B cell (primary cell): ENCODE measurements at regions of chr20 and their contacts with region 1.

Region 1: DNA sequence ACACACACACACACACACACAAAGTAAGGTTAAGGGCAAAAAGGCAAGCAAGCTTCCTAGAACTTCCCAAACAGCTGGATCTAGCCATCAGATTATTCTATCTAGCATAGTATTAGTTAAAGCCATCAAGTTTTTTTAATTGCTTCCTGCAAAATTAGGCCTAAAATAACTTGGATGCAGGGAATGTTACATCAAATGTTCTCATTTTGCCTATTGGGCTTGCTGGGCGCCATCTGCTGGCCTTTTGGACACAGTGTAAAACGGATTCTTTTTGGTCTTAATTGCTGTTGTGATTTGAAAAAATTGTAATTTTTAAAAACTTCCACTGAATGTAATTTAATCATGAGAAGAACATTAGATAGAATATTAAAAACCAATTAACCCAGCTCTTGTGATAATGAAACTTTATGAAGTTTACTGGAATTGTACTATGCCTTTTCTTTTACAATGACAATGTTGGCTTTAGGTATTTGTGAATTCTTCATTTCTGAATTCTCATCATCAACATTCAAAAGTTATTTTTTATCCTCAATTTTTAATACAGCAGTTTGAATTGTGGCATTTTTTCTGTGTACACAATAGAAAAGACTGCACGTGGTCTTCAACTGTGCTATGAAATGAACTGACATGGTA is 6.8 kb downstream of the MKKS start:
- DNase-seq: peak; percentile 62
- ATAC-seq: no peak
- H3K4me3 ChIP-seq: no peak overlapping the region
- H3K4me3 Mint-ChIP-seq: no peak overlapping the region
- H3K27ac ChIP-seq: no peak overlapping the region
- H3K27ac Mint-ChIP-seq: no peak overlapping the region
- H3K4me1 ChIP-seq: no peaks in the 10 kb centered on the region
- H3K4me1 Mint-ChIP-seq: peaks cover 34% of the 10 kb centered on the region
- H3K27me3 ChIP-seq: no peaks in the 10 kb centered on the region
- H3K27me3 Mint-ChIP-seq: no peaks in the 10 kb centered on the region
- CTCF ChIP-seq: peak; percentile 84

Region 2: DNA sequence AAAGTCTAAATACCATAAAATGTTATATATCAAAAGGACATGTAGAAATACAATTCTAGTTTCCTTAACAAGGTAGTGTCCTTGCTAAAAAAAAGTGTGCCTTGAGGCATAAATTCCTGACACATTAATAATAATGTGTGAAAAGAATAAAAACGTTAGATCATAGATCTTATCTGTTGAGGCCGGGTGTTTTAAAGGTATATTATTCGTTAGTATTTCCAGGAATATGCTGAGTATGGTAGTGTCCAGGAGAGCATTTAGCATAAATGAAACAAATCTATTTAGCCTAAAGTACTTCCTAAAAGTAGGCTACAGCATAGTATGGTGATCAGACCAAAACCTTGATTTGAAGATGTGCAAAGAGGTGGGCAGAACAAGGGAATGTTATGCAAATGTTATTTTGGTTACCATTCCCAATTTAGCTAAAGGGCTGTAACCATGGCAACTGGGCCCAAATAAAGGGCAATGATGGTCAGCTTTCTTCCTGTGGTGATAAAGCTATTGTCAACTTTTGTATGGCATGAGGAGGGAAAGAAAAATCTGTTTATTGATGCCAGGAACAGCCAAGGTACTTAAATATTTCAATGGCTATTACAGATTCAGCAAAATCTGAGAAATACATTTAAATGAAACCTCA is 12.0 kb before region 1 on chr20:
- CTCF ChIA-PET with region 1: interaction called, 24 read pairs
- POLR2A ChIA-PET with region 1: no interaction called
- intact Hi-C with region 1: no loop called
- DNase-seq: no peak
- ATAC-seq: no peak
- H3K4me3 ChIP-seq: no peak overlapping the region
- H3K4me3 Mint-ChIP-seq: no peak overlapping the region
- H3K27ac ChIP-seq: no peak overlapping the region
- H3K27ac Mint-ChIP-seq: no peak overlapping the region
- H3K4me1 ChIP-seq: peaks cover 0 to 8% of the 10 kb centered on the region in 2 donors
- H3K4me1 Mint-ChIP-seq: peaks cover 16% of the 10 kb centered on the region
- H3K27me3 ChIP-seq: no peaks in the 10 kb centered on the region
- H3K27me3 Mint-ChIP-seq: no peaks in the 10 kb centered on the region
- CTCF ChIP-seq: no peak

Region 3: GRCh38 chr20:10453241-10453640 is 26.1 kb after region 1 on chr20:
- CTCF ChIA-PET with region 1: interaction called, 12 read pairs
- POLR2A ChIA-PET with region 1: no interaction called
- intact Hi-C with region 1: no loop called
- DNase-seq: peak; percentile 33
- ATAC-seq: peak; percentile 78
- H3K4me3 ChIP-seq: no peak overlapping the region
- H3K4me3 Mint-ChIP-seq: peak overlapping the region; percentile 11
- H3K27ac ChIP-seq: peak overlapping the region in 1 of 2 donors; percentile 52
- H3K27ac Mint-ChIP-seq: peak overlapping the region; percentile 39
- H3K4me1 ChIP-seq: peaks cover 7 to 13% of the 10 kb centered on the region in 2 donors
- H3K4me1 Mint-ChIP-seq: peaks cover 19% of the 10 kb centered on the region
- H3K27me3 ChIP-seq: no peaks in the 10 kb centered on the region
- H3K27me3 Mint-ChIP-seq: no peaks in the 10 kb centered on the region
- CTCF ChIP-seq: no peak

Region 4: GRCh38 chr20:10731190-10731965 is 304.2 kb after region 1 on chr20:
- CTCF ChIA-PET with region 1: no interaction called
- POLR2A ChIA-PET with region 1: no interaction called
- intact Hi-C with region 1: no loop called
- DNase-seq: no peak
- ATAC-seq: no peak
- H3K4me3 ChIP-seq: no peak overlapping the region
- H3K4me3 Mint-ChIP-seq: no peak overlapping the region
- H3K27ac ChIP-seq: no peak overlapping the region
- H3K27ac Mint-ChIP-seq: no peak overlapping the region
- H3K4me1 ChIP-seq: no peaks in the 10 kb centered on the region
- H3K4me1 Mint-ChIP-seq: no peaks in the 10 kb centered on the region
- H3K27me3 ChIP-seq: no peaks in the 10 kb centered on the region
- H3K27me3 Mint-ChIP-seq: peaks cover 1% of the 10 kb centered on the region
- CTCF ChIP-seq: no peak